Psoas muscle (tissue), 8 donors: ENCODE measurements at regions of chrX and their contacts with region 1.

Region 1: DNA sequence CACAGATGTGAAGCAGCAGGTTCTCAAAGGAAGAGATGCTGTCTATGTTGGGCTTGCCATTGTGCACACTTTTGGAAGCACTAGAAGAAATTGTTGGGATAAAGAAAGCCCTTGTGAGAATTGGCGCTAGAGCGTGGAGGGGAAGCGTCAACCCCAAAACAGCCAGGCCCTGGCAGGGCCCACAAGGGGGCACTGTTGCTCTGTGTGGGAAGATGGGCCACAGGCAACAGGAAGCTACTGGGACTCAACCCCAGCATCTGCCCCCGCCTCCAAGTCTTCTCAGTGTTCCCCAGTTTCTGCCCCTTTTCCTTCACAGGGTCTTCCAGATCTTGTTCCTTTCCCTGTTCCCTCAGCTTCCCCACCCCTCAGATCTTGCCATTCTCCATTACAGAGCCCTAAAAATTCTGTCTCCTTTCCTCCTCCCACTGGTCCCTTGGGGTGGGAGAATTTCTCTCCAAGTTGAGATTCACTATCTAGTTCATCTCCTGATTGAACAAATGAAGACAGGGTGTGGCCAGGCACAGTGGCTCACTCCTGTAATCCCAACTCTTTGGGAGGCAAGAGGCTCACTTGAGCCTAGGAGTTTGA is 85.5 kb downstream of the STARD8 start:
- DNase-seq: peak; percentile 60 to 77
- ATAC-seq: peak; percentile 56 to 80 (median 68)
- H3K4me3 ChIP-seq: no peak overlapping the region
- H3K27ac ChIP-seq: no peak overlapping the region
- H3K4me1 ChIP-seq: no peaks in the 10 kb centered on the region
- H3K27me3 ChIP-seq: no peaks in the 10 kb centered on the region
- CTCF ChIP-seq: peak; percentile 72

Region 2: DNA sequence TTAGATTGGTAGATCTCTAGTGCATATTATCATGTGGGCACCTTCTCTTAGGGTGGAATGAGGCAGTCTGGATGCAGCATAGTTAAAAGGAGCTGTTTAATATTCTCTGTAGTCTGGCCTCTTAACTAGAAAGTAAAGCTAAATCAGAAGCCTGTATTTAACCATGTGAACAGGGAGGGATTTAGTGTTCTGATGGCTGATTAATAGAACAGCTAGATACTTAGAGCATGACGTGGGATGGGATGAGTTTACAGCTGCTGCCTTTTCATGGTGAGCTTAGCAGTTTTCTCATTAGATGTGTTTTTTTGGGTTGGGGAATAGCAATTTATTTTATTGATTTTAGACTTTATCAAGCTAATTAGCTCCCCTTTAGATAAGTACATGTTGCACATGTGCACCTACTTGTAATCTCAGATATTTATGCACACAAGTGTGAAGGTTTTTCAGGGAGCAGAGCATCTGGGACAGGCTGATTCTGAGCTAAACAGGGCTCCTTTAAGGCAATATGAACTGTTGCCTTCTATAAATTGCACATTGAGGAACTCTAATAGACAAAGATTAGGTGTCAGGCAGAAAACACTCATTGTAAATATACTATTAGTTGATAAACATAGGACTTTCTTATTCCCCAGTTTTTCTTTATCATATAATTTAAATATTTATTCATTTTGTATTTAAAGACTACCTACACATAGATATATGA is 200.0 kb before region 1 on chrX:
- intact Hi-C with region 1: no loop called
- DNase-seq: no peak
- ATAC-seq: peak; percentile 51 to 80 (median 62)
- H3K4me3 ChIP-seq: no peak overlapping the region
- H3K27ac ChIP-seq: peak overlapping the region; percentile 46
- H3K4me1 ChIP-seq: peaks cover 3% of the 10 kb centered on the region
- H3K27me3 ChIP-seq: peaks cover 0 to 9% (median 0%) of the 10 kb centered on the region in 3 donors
- CTCF ChIP-seq: no peak

Region 3: GRCh38 chrX:68807818-68808217 is 74.8 kb after region 1 on chrX:
- intact Hi-C with region 1: loop called in 1 of 2 experiments (anchors 1 kb)
- DNase-seq: no peak
- ATAC-seq: no peak
- H3K4me3 ChIP-seq: no peak overlapping the region
- H3K27ac ChIP-seq: no peak overlapping the region
- H3K4me1 ChIP-seq: no peaks in the 10 kb centered on the region
- H3K27me3 ChIP-seq: peaks cover 0 to 35% (median 0%) of the 10 kb centered on the region in 3 donors
- CTCF ChIP-seq: peak; percentile 33

Region 4: GRCh38 chrX:69387567-69388487 is 654.8 kb after region 1 on chrX:
- intact Hi-C with region 1: loop called in 1 of 2 experiments (anchors 5 kb)
- DNase-seq: peak; percentile 36 to 70
- ATAC-seq: peak; percentile 57 to 78 (median 65)
- H3K4me3 ChIP-seq: no peak overlapping the region
- H3K27ac ChIP-seq: no peak overlapping the region
- H3K4me1 ChIP-seq: no peaks in the 10 kb centered on the region
- H3K27me3 ChIP-seq: peaks cover 0 to 36% (median 0%) of the 10 kb centered on the region in 3 donors
- CTCF ChIP-seq: peak; percentile 70